MCF 10A (cell line): ENCODE measurements at regions of chr1 and their contacts with region 1.

Region 1: DNA sequence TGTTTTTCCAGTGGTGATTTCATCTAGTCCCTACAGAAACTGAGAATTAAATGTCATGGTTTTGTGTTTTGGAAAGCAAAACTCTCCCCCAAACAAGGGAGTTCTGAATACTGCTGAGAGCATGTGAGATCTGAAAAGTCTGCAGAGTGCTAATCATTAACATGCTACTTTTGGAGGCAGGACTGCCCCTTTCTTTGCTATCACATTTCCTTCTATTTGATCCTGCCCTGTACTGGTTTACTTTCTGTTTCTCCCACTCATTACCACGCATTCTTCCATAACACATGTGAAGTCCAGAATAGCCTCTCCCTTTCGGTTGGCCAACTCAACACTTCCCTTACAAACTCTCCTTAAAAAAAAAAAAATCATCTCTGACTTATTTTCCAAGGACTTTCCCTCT is 63.6 kb downstream of the GADD45A start:
- DNase-seq: peak; percentile 79
- H3K4me3 Mint-ChIP-seq: peak overlapping the region; percentile 65
- H3K27ac Mint-ChIP-seq: peak overlapping the region; percentile 89
- H3K4me1 Mint-ChIP-seq: peaks cover 58% of the 10 kb centered on the region
- H3K27me3 Mint-ChIP-seq: no peaks in the 10 kb centered on the region
- CTCF ChIP-seq: no peak

Region 2: GRCh38 chr1:67659229-67659628 is 89.4 kb before region 1 on chr1:
- CTCF ChIA-PET with region 1: no interaction called
- POLR2A ChIA-PET with region 1: no interaction called
- intact Hi-C with region 1: no loop called
- DNase-seq: no peak
- H3K4me3 Mint-ChIP-seq: no peak overlapping the region
- H3K27ac Mint-ChIP-seq: no peak overlapping the region
- H3K4me1 Mint-ChIP-seq: no peaks in the 10 kb centered on the region
- H3K27me3 Mint-ChIP-seq: no peaks in the 10 kb centered on the region
- CTCF ChIP-seq: no peak

Region 3: DNA sequence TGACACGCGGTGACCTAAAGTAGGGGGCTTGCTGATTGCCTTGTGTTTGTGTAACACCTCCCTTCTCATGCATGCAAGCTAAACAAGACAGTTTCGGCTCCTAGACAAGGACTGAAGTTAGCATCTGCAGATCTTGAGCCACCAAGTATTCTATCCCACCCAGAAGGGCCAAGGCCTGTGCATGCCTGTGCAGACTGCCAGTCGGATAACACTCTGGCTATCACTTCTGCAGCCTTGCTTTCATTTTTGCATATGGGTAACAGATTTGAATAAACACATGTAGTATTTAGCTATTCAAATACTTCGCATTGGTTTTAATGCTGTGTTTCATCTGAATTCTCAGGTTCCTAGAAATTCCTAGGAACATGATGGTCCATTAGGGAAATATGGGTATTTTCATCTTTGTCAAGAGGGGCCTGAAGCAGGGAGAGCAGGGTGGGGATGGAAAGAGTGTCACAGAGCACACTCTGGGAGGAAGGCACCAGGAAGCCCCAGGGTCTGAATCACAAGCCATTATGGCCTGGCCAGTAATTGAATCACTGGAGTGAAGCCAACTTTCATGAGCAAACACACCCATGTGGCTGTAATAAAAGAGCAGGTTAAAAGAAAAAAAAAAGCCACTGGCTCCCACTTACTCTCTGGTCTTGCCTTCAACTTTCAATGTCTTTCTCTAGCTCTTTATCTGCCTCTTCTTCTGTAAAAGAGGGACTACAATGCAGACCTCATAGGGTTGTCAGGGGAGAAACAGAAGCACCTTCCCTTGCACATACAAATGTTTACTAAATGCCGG is 35.4 kb before region 1 on chr1:
- CTCF ChIA-PET with region 1: interaction called, 4 read pairs
- POLR2A ChIA-PET with region 1: interaction called, 34 read pairs
- intact Hi-C with region 1: loop called (anchors 2 kb)
- DNase-seq: peak; percentile 85
- H3K4me3 Mint-ChIP-seq: no peak overlapping the region
- H3K27ac Mint-ChIP-seq: peak overlapping the region; percentile 87
- H3K4me1 Mint-ChIP-seq: peaks cover 52% of the 10 kb centered on the region
- H3K27me3 Mint-ChIP-seq: no peaks in the 10 kb centered on the region
- CTCF ChIP-seq: no peak

Region 4: GRCh38 chr1:67723620-67724019 is 25.0 kb before region 1 on chr1:
- CTCF ChIA-PET with region 1: no interaction called
- POLR2A ChIA-PET with region 1: interaction called, 40 read pairs
- intact Hi-C with region 1: no loop called
- DNase-seq: peak; percentile 77
- H3K4me3 Mint-ChIP-seq: no peak overlapping the region
- H3K27ac Mint-ChIP-seq: no peak overlapping the region
- H3K4me1 Mint-ChIP-seq: peaks cover 16% of the 10 kb centered on the region
- H3K27me3 Mint-ChIP-seq: no peaks in the 10 kb centered on the region
- CTCF ChIP-seq: no peak

Region 5: DNA sequence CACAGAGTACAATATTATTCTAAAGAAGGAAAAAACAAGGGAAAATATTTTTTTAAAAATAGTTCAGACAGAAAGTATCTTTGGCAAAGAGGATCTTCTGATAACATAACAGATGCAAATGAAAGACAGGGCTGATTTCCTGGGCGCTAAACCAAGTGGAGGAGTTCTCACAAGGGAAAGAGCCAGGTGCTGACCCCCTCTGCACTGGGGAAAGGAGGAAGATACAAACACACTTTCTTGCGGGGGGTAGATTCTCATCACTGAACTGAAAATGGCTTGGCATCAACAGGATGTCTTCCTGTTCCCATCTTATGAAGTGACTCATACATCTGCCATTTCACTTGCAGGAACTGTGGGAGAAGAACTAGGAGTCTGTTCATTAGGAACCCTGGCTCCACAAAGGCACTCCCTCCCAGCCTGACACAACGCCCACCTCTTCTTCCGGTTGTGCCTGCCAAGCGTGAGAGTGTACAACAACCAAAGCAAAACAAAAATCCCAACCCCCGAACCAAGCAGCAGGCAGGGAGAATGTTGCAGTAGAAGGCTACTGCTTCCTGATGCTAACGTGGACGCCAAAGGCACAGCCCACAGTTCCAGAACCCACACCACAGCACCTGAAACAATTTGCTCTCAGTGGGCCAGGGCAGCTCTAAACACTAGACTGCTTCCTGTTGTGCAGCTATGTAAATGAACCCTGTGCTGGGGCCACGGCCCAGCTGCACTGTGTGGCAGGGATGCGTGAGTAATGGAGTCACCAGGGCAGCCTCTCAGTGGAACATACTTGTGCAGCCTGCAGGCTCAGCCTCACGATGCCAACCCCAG is 12.6 kb before region 1 on chr1:
- CTCF ChIA-PET with region 1: interaction called, 4 read pairs
- POLR2A ChIA-PET with region 1: interaction called, 56 read pairs
- intact Hi-C with region 1: loop called (anchors 1 kb)
- DNase-seq: peak; percentile 98
- H3K4me3 Mint-ChIP-seq: peak overlapping the region; percentile 64
- H3K27ac Mint-ChIP-seq: peak overlapping the region; percentile 96
- H3K4me1 Mint-ChIP-seq: peaks cover 34% of the 10 kb centered on the region
- H3K27me3 Mint-ChIP-seq: no peaks in the 10 kb centered on the region
- CTCF ChIP-seq: no peak

Region 6: GRCh38 chr1:67785847-67786753 is 37.5 kb after region 1 on chr1:
- CTCF ChIA-PET with region 1: no interaction called
- POLR2A ChIA-PET with region 1: no interaction called
- intact Hi-C with region 1: no loop called
- DNase-seq: no peak
- H3K4me3 Mint-ChIP-seq: no peak overlapping the region
- H3K27ac Mint-ChIP-seq: no peak overlapping the region
- H3K4me1 Mint-ChIP-seq: peaks cover 40% of the 10 kb centered on the region
- H3K27me3 Mint-ChIP-seq: no peaks in the 10 kb centered on the region
- CTCF ChIP-seq: no peak